Dorsolateral prefrontal cortex (tissue), 120 donors: ENCODE measurements at regions of chr1 and their contacts with region 1.

Region 1: DNA sequence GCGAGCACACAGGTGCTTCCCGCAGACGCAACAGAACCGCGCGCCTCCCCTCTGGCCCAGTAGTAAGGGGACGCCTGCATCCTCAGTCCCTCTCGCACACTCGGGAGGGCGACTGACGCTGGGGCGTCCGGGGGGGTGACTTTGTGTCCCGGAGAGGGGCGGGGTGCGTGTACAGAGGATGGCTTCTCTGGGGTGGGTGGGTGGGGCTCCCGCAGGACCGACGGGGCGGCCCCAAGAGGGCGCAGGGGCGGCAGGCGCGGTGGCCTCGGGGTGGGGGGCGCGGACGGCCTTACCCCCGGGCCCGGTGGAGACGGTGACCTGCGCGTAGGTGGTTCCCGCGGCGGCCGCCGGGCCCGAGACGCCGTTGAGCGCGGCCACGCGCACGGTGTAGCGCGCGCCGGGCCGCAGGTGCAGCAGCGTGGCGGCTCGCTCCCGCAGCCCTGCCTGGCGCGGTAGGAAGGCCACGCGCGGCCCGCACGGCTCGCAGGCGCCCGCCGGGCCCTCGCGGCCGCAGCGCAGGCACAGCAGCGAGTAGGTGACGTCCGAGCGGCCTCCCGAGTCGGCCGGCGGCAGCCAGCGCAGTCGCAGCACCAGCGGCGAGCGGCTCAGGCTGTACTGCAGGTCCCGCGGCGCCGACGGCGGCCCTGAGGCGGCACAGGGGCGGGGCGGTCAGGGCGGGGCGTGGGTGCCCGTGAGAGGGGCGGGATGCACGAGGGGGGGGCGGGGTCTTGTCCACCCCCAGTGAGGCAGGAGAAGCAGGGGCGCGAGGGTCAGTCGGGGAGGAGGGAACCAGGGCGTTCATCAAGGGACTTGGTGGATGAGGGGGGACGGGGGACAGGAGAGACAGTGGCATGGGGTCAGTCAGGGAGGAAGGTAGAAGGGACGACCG is 12.1 kb downstream of the EPHA10 start:
- DNase-seq: peak in 2 of 10 donors; percentile 20 to 52
- H3K4me3 ChIP-seq: peak overlapping the region; percentile 10 to 66 (median 50)
- H3K27ac ChIP-seq: peak overlapping the region in 15 of 59 donors; percentile 2 to 65 (median 39)
- H3K27me3 ChIP-seq: peaks cover 0 to 21% (median 5%) of the 10 kb centered on the region in 45 donors
- CTCF ChIP-seq: peak in 4 of 56 donors; percentile 10 to 21 (median 14)

Region 2: DNA sequence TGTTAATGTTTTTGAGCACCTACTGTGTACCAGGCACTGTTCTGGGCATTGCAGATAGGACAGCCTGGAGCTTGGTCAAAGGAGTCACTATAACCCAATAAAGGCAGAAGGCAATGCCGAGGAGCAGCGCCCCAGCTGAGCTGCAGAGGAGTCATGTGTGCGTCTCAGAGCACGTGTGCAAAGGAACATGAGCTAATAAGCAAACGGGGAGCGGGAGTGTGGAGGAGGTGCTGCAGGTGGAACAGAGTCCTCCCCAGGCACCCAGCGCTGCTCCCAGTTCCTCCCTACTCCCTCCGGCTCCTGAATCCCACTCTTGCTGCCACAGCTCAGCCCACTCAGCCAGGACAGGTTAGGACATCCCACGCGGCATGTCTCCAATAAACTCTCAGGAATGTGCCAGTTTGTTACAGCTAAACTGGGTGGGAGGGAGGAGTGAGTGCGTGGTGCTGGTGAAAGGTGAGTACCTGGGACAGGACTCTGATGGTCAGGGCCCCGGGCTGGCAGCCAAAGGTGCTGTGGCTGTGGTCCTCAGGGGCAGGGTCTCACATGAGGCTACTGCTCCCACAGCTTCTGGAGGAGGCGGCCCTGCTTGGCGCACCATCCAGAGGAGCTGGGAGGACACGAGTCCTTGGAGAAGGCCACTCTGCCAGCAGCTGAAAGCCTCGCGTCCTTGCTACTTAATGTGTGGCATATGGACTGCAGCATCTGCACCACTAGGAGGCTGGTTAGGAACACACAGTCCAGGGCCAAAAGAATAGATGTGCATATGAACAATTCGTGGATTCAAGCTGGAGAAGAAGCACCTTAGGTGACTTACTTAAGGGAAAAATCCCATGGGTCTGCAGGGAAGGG is 770.8 kb before region 1 on chr1:
- intact Hi-C with region 1: no loop called
- DNase-seq: peak in 4 of 10 donors; percentile 24 to 54 (median 35)
- H3K4me3 ChIP-seq: no peak overlapping the region
- H3K27ac ChIP-seq: peak overlapping the region in 14 of 59 donors; percentile 3 to 69 (median 25)
- H3K27me3 ChIP-seq: peaks cover 0 to 7% (median 0%) of the 10 kb centered on the region in 45 donors
- CTCF ChIP-seq: peak in 2 of 56 donors; percentile 16 to 26

Region 3: GRCh38 chr1:37764414-37764825 is 11.6 kb after region 1 on chr1:
- intact Hi-C with region 1: loop called in 1 of 2 experiments (anchors 1 kb)
- DNase-seq: peak in 6 of 10 donors; percentile 28 to 79 (median 54)
- H3K4me3 ChIP-seq: peak overlapping the region in 58 of 59 donors; percentile 7 to 68 (median 54)
- H3K27ac ChIP-seq: peak overlapping the region in 21 of 59 donors; percentile 9 to 74 (median 52)
- H3K27me3 ChIP-seq: peaks cover 0 to 68% (median 36%) of the 10 kb centered on the region in 45 donors
- CTCF ChIP-seq: peak in 1 of 56 donors; percentile 9